ENCODE measurements at regions of chr16 and their contacts with region 1.

Region 1: DNA sequence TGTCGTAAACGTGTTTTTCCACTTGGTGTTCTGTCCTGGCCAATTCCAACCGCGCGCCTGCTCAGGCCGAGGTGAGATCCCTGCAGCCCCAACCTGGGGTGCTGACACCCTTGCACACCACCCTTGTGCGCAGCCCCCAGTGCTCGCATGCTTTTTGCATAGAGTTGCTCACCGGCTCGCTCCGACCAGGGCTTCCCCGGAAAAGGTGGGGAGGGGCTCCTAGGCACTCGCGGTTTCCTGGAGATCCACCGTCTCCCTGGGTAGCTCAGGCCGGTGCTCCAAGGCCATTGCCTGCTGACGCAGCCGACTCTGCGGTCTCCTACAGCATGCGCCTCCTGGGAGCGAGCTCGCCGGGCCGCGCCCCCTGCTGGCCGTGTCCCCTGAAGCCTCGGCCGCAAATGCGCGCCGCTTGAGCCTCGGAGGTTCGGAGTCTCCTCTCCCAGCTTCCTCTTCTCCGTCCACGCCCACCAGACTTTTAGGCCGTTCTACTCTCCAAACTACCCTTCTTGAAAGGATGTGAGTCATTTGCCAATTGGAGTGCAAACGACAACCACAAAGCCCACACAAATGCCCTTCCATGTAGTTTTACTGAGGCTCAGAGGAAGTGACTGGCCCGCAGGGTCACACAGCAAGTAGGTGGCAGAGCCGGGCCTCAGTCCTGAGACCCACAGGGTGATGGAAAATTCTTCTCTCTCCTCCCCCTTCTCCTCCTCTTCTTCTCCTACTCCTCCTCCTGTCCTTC is 7.2 kb upstream of the PDP2 start:
- DNase-seq: peak; percentile 85 to 94
- ATAC-seq: peak; percentile 81 to 94 (median 87)
- H3K4me3 ChIP-seq: peak overlapping the region; percentile 39
- H3K4me3 Mint-ChIP-seq: peak overlapping the region; percentile 96
- H3K27ac ChIP-seq: peak overlapping the region; percentile 54
- H3K27ac Mint-ChIP-seq: peak overlapping the region; percentile 88 to 94
- H3K4me1 ChIP-seq: peaks cover 36% of the 10 kb centered on the region
- H3K4me1 Mint-ChIP-seq: peaks cover 24 to 40% of the 10 kb centered on the region in 2 donors
- H3K27me3 ChIP-seq: no peaks in the 10 kb centered on the region
- H3K27me3 Mint-ChIP-seq: no peaks in the 10 kb centered on the region
- CTCF ChIP-seq: peak; percentile 75

Region 2: DNA sequence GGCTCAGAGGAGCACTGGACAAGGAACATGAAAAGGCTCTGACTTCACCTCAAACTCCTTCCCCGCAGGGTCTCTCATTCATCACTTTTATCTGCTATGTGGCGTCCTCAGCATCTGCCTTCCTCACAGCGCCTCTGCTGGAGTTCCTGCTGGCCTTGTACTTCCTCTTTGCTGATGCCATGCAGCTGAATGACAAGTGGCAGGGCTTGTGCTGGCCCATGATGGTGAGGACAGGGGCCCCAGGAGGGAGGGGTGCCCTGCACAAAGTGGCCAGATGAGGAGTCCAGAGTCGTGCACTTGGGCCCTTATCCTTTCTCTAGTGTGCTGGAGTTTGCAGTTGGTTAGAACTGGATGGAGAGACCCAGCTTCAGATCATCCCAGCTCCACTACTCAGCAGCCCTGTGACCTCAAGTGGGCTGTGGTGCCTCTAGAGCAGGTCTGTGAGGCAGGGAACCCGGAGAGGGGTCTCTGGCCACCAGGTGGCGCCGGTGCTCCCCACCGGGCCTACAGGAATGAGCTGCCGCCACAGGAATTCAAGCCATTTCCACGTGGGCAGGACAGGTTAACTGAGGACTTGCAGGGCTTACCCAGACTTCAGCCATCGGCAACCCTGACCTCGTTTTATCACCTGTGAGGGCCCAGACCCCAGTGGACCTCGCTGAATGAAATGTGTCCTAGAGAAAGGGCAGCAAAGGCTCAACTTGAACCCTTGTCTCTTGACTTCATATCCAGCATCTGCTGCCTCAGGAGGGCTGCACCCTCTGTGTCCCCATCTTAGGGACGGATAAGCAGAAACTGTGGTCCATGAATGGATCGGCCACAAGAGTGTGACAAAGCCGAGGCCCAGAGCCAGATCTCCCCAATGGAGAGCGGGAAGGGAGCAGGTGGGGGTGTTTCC is 264.6 kb before region 1 on chr16:
- intact Hi-C with region 1: loop called (anchors 10 kb)
- DNase-seq: peak; percentile 72 to 88
- ATAC-seq: peak; percentile 22 to 41 (median 40)
- H3K4me3 ChIP-seq: no peak overlapping the region
- H3K4me3 Mint-ChIP-seq: peak overlapping the region; percentile 53
- H3K27ac ChIP-seq: no peak overlapping the region
- H3K27ac Mint-ChIP-seq: peak overlapping the region; percentile 56 to 77
- H3K4me1 ChIP-seq: peaks cover 46% of the 10 kb centered on the region
- H3K4me1 Mint-ChIP-seq: peaks cover 21 to 35% of the 10 kb centered on the region in 2 donors
- H3K27me3 ChIP-seq: no peaks in the 10 kb centered on the region
- H3K27me3 Mint-ChIP-seq: no peaks in the 10 kb centered on the region
- CTCF ChIP-seq: peak; percentile 84

Region 3: DNA sequence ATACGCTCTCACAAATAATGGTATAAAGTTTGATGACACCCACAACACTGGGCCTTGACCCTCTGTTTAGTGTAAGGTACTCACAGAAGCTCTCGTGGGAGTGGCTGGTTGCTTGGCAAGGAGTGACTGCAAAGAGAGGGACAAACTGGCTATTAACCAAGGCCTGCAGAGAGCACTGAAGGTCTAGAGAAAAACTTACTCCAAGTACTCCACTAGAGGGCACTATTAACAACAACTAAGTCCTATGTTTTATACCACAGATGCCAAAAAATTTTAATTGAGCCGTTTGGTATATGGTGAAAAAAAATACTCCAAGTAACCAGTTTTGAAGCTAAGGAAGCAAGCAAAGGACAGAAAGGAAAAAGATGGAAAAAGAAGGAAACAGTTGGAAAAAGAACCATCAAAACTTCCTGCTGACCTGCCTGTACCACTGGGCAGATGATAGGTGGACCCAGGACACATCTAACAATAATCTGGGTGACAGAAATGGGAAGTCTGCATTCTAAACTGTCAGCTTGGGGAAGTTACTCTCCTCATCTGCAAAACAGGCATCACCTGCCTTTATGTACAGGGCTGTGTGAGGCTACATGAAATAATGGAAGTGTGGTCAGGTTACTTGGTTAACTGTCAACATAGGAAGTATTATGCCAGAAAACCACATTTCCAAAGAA is 144.9 kb before region 1 on chr16:
- intact Hi-C with region 1: loop called (anchors 5 kb)
- DNase-seq: peak in 1 of 2 donors; percentile 64
- ATAC-seq: peak; percentile 82 to 88 (median 84)
- H3K4me3 ChIP-seq: no peak overlapping the region
- H3K4me3 Mint-ChIP-seq: no peak overlapping the region
- H3K27ac ChIP-seq: no peak overlapping the region
- H3K27ac Mint-ChIP-seq: peak overlapping the region; percentile 7 to 17
- H3K4me1 ChIP-seq: no peaks in the 10 kb centered on the region
- H3K4me1 Mint-ChIP-seq: peaks cover 7% of the 10 kb centered on the region in 2 donors
- H3K27me3 ChIP-seq: no peaks in the 10 kb centered on the region
- H3K27me3 Mint-ChIP-seq: no peaks in the 10 kb centered on the region
- CTCF ChIP-seq: peak; percentile 76

Region 4: GRCh38 chr16:66830422-66831404 is 42.4 kb before region 1 on chr16 and contains the start of gene NAE1:
- intact Hi-C with region 1: loop called (anchors 1 kb)
- DNase-seq: peak; percentile 92 to 97
- ATAC-seq: peak; percentile 97 to 98 (median 97)
- H3K4me3 ChIP-seq: peak within 1 kb of the TSS; percentile 65
- H3K4me3 Mint-ChIP-seq: peak within 1 kb of the TSS; percentile 80
- H3K27ac ChIP-seq: peak within 1 kb of the TSS; percentile 26
- H3K27ac Mint-ChIP-seq: peak within 1 kb of the TSS; percentile 75
- H3K4me1 ChIP-seq: peaks cover 16% of the 10 kb centered on the region
- H3K4me1 Mint-ChIP-seq: peaks cover 26 to 27% of the 10 kb centered on the region in 2 donors
- H3K27me3 ChIP-seq: no peaks in the 10 kb centered on the region
- H3K27me3 Mint-ChIP-seq: no peaks in the 10 kb centered on the region
- CTCF ChIP-seq: peak; percentile 98
- total RNA-seq, gene NAE1: 77.3 to 97.0 (median 78.5) TPM